ENCODE measurements at regions of chr20 and their contacts with region 1.

Region 1: DNA sequence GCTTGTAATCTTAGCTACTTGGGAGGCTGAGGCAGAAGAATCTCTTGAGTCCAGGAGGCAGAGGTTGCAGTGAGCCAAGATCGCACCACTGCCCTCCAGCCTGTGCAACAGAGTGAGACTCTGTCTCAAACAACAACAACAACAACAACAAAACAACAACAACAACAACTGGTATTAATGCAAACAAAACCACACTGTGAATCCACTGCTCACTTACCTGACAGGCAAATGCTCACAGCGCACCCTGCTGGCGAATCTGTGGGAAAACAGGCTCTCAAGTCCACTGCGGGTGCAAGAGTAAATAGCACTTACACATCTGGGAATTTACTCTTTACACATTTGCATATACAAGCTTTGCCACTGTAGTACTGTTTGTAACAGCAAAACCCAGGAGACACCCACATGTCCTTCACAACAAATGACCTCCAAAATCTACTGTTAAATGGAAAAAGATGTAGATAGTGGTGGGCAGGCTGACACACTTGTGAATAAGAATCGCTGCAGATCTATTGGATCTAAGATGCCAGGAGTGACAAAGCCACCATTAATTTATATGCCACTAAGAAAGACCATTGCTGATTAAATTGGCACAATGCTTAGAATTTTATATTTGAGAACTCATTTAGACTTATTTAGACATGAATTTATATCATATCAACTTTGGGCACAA is 29.3 kb downstream of the NSFL1C start:
- DNase-seq: peak; percentile 82
- ATAC-seq: peak; percentile 56; the same call in 1 of the 2 replicates
- H3K4me3 Mint-ChIP-seq: no peak overlapping the region
- H3K27ac Mint-ChIP-seq: peak overlapping the region; percentile 29; the same call in 1 of the 2 replicates
- H3K4me1 Mint-ChIP-seq: peaks cover 13% of the 10 kb centered on the region
- H3K27me3 Mint-ChIP-seq: no peaks in the 10 kb centered on the region
- CTCF ChIP-seq: peak; percentile 76

Region 2: DNA sequence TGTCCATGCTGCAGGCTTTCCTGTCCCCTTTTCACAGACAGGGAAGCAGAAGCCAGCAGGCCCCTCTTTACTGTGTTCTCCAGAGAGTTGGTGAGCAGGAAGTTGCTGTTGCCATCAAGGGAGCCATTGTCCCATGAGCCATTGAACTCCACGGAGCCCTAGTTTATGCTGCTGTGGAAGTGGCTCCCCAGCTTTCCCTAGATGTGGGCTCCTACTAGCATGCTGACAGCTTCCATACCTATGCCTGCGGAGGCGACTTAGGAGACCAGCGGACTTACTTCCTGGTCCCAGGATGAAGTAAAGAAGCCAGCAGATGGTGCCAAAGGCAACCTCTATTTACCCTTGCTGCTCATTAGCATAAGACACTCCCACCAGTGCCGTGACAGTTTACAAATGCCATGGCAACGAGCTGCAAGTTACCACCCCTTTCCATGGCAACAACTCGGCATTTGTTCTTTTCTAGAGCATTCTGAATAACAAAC is 13.7 kb before region 1 on chr20:
- CTCF ChIA-PET with region 1: interaction called, 38 read pairs
- POLR2A ChIA-PET with region 1: no interaction called
- DNase-seq: peak; percentile 81
- ATAC-seq: peak; percentile 85
- H3K4me3 Mint-ChIP-seq: no peak overlapping the region
- H3K27ac Mint-ChIP-seq: no peak overlapping the region
- H3K4me1 Mint-ChIP-seq: peaks cover 35% of the 10 kb centered on the region
- H3K27me3 Mint-ChIP-seq: peaks cover 5% of the 10 kb centered on the region; the same call in 1 of the 2 replicates
- CTCF ChIP-seq: no peak

Region 3: DNA sequence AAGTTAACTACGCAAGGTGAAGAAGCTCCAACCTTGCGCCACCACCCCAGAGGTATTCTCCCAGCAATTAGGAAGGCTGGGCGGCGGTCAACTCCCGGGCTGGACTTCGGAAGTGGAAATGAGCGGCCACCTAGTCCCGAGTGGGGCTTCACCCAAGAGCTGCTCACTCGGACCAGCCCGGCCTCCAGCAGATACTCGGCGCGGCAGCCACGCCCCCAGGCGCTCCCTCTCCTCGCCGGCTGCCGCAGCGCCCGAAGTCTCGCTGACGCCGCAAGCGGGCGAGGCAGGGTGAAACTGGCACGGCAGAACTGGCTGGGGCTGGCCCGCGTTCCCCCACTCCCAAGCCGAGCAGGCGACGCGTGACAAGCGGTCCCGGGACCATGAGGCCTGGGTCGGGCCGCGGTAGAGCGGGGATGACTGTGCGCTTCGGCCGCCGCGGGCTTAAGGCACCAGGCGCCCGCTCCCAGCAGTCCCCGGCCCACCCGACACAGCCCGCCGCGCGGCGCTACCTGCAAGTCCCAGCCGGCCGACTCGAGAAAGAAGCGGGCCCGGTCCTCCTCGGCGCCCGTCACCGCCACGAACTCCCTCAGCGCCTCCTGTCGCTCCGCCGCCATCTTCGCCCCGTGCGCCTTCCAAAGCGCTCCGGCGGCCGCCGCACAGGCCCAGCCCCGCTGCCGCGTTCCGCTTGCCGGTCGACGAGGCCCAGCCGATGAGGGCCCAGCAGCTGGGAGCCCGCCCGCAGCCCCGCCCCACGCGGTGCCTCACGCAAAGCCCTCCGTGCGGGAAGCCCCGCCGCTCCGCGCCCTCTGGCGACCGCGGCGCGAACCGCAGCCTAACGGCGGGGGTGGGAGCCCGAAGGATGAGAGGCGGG is 29.1 kb after region 1 on chr20 and contains the start of gene NSFL1C:
- CTCF ChIA-PET with region 1: interaction called, 20 read pairs
- POLR2A ChIA-PET with region 1: no interaction called
- DNase-seq: peak; percentile 98
- ATAC-seq: peak; percentile 91
- H3K4me3 Mint-ChIP-seq: peak within 1 kb of the TSS; percentile 85
- H3K27ac Mint-ChIP-seq: peak within 1 kb of the TSS; percentile 53; the same call in 1 of the 2 replicates
- H3K4me1 Mint-ChIP-seq: peaks cover 27% of the 10 kb centered on the region
- H3K27me3 Mint-ChIP-seq: peaks cover 4% of the 10 kb centered on the region
- CTCF ChIP-seq: peak; percentile 91
- total RNA-seq, gene NSFL1C: 76.7 to 85.5 TPM (median 83.2 TPM) in 3 replicates